Activated B cell treated with CpG ODN at 0.5 μM for 24 hours (primary cell): ENCODE measurements at regions of chr19 and their contacts with region 1.

Region 1: GRCh38 chr19:17775245-17775916 is 19.6 kb upstream of the B3GNT3 start:
- DNase-seq: no peak
- ATAC-seq: no peak
- H3K4me3 Mint-ChIP-seq: peak overlapping the region; percentile 82
- H3K27ac Mint-ChIP-seq: peak overlapping the region; percentile 99
- H3K4me1 Mint-ChIP-seq: peaks cover 48% of the 10 kb centered on the region
- H3K27me3 Mint-ChIP-seq: no peaks in the 10 kb centered on the region
- CTCF ChIP-seq: no peak

Region 2: DNA sequence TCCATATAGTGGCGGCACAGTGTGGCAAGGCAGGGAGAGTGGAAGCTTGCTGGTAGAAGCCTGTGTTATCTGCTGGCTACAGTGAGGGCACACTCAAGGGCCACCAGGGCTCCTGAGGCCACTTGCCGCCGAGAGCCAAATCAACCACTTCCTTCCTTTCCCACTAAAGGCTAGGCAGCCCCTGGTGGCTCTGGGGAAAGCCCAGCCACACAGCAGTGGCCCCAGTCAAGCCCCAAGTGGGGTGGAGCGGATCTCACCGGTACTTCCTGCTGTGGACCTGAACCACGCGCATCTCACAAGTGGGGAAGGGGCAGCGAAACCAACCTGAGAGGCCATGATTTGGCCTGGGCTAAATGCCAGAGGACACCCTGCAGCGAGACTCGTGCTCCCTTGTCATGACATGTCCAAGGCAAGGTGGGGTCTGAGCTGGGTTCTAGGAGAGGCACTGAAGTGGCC is 1181.2 kb before region 1 on chr19:
- CTCF ChIA-PET with region 1: no interaction called
- POLR2A ChIA-PET with region 1: interaction called, 11 read pairs
- intact Hi-C with region 1: no loop called
- DNase-seq: peak; percentile 54
- ATAC-seq: peak; percentile 78
- H3K4me3 Mint-ChIP-seq: peak overlapping the region; percentile 73
- H3K27ac Mint-ChIP-seq: peak overlapping the region; percentile 89
- H3K4me1 Mint-ChIP-seq: peaks cover 83% of the 10 kb centered on the region
- H3K27me3 Mint-ChIP-seq: no peaks in the 10 kb centered on the region
- CTCF ChIP-seq: no peak

Region 3: DNA sequence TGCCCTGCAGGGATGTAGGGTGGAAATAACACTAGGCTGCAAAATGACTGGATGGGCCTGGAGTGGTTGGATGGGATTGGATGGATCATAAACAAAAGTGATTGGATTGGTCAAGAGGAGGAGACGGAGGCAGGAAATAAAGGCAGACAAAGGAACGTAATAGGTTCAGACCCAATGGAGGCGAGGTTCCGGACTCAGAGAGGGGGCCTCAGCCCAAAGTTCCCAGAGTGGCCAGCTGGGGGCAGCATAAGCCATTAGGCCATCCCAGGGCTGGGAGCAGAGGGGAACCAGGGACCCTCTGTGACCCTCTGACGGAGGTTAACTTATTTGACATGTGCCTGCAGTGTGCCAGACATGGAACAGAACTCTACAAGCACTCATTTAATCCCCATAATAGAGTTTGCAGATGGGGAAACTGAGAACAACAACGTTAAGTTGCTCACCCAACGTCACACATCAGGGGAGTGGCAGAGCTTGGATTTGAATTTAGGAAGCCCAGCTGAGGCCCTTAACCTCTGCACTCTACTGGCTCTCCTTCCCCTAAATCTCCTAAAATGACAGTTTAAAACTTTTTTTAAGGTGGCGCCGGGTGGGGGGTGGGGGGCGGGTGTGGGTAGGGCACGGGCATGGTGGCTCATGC is 71.4 kb before region 1 on chr19:
- CTCF ChIA-PET with region 1: interaction called, 25 read pairs
- POLR2A ChIA-PET with region 1: interaction called, 3 read pairs
- intact Hi-C with region 1: no loop called
- DNase-seq: peak; percentile 70
- ATAC-seq: peak; percentile 97
- H3K4me3 Mint-ChIP-seq: no peak overlapping the region
- H3K27ac Mint-ChIP-seq: no peak overlapping the region
- H3K4me1 Mint-ChIP-seq: peaks cover 2% of the 10 kb centered on the region
- H3K27me3 Mint-ChIP-seq: peaks cover 8% of the 10 kb centered on the region
- CTCF ChIP-seq: peak; percentile 64

Region 4: DNA sequence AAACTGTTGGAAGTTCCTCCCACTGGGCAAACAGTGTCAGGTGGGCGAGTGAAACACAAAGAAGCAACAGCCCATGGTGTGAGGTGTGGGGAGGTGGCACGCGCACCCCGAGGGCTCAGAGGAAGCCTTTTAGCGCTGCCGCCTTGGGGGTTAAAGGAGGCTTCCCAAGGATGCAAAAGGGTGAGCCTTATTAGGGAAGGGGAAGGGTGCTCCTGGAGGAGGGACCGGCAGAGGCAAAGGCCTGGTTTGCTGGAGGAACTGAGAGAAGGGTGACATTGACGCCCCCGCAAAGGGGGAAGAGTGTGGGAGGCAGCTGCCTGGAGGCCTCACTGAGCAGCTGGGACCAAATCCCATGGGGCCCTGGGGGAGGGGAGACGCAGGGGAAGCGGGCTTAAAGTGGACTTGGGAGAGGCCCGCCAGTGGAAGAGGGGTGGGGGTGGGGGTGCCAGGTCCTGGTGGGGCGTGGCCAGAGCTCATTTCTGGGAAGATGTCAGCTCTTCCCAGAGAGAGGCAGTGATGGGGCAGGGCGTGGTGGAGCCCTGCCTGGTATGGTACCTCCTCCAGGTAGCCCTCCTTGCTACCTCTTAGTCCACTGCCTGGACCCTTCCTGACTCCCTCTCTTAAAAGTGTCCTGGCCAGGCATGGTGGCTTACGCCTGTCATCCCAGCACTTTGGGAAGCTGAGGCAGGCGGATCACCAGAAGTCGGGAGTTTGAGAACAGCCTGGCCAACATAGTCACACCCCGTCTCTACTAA is 36.1 kb before region 1 on chr19:
- CTCF ChIA-PET with region 1: no interaction called
- POLR2A ChIA-PET with region 1: interaction called, 10 read pairs
- intact Hi-C with region 1: loop called (anchors 5 kb)
- DNase-seq: peak; percentile 68
- ATAC-seq: peak; percentile 84
- H3K4me3 Mint-ChIP-seq: peak overlapping the region; percentile 75
- H3K27ac Mint-ChIP-seq: peak overlapping the region; percentile 83
- H3K4me1 Mint-ChIP-seq: peaks cover 43% of the 10 kb centered on the region
- H3K27me3 Mint-ChIP-seq: no peaks in the 10 kb centered on the region
- CTCF ChIP-seq: no peak

Region 5: DNA sequence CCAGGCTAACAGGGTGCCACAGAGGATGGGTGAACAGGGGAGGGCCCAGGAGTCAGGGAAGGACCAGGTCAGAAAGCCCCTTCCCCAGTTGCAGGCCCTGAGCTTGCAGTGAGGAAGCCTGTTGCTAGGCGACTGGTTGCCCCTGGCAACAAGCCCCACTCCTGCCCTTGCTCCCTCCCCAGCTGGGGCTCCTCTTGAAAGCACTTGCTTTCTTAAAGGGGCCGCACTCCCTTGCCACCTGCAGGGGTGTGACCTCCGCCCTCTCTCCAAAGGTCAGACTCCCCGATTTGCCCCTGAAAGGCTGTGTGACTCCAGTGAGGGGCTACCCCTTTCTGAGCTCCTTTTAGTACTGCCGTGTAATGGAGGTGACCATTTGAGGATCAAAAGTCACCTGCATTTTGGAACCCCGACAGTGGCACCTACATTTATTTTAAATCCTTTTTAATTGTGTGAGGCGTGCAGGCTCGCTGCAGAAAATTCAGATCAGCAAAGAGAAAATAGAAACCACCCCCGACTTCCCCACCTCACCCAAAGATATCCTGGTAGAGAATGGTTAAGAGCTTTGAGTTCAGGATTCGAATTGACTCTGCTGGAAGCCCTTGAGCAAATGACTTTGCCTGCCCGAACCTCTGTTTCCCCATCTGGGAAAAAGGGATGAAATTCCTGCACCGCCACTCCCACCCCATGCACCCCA is 19.3 kb before region 1 on chr19:
- CTCF ChIA-PET with region 1: interaction called, 15 read pairs
- POLR2A ChIA-PET with region 1: interaction called, 109 read pairs
- intact Hi-C with region 1: loop called (anchors 1 kb)
- DNase-seq: peak; percentile 61
- ATAC-seq: no peak
- H3K4me3 Mint-ChIP-seq: peak overlapping the region; percentile 46
- H3K27ac Mint-ChIP-seq: peak overlapping the region; percentile 90
- H3K4me1 Mint-ChIP-seq: peaks cover 84% of the 10 kb centered on the region
- H3K27me3 Mint-ChIP-seq: no peaks in the 10 kb centered on the region
- CTCF ChIP-seq: no peak

Region 6: DNA sequence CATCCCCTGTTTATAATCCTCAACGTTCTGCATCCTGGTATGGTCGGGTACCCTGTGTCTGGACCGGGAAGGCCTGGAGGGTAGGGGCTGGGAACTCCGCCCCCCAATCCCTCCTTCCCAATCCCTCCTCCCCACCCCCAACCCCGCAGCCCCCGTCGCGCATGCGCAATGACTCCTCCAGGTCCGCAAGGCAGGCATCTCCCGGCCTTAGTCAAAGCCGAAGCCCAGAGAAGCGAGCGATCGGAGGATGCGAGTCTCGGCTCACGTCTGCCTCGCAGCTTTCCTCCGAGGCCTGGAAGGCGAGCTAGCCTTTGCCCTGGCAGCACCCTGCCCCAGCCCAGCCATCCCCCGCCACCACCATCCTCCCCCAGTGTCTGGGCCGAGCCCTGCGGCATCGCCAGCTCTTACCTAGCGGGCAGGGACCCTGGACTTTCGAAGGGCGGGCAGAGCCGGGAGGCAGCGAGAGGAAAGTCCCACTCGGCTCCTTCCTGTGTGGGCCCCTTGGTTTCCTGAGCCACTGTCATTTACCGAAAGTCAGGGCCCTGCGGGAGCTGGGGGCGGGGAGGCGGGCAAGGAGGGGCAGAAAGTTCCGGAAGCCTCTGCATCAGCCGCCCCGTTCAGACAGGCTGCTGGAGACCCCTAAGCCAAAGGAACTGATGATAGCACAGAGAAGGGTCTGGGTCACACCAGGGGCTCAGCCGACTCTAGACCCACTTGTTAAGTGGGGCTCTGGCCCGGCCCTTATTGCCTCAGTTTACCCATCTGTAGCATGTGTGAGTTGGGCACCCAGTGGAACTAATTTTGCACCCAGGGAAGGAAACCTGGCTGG is 72.4 kb after region 1 on chr19 and contains the start of gene JAK3:
- CTCF ChIA-PET with region 1: no interaction called
- POLR2A ChIA-PET with region 1: interaction called, 32 read pairs
- intact Hi-C with region 1: loop called (anchors 1 kb)
- DNase-seq: peak; percentile 79
- ATAC-seq: peak; percentile 86
- H3K4me3 Mint-ChIP-seq: peak within 1 kb of the TSS; percentile 94
- H3K27ac Mint-ChIP-seq: peak within 1 kb of the TSS; percentile 96
- H3K4me1 Mint-ChIP-seq: peaks cover 73% of the 10 kb centered on the region
- H3K27me3 Mint-ChIP-seq: no peaks in the 10 kb centered on the region
- CTCF ChIP-seq: no peak
- total RNA-seq, gene JAK3: 213 and 256 TPM in 2 replicates